PC-9 (cell line): ENCODE measurements at regions of chr12 and their contacts with region 1.

Region 1: DNA sequence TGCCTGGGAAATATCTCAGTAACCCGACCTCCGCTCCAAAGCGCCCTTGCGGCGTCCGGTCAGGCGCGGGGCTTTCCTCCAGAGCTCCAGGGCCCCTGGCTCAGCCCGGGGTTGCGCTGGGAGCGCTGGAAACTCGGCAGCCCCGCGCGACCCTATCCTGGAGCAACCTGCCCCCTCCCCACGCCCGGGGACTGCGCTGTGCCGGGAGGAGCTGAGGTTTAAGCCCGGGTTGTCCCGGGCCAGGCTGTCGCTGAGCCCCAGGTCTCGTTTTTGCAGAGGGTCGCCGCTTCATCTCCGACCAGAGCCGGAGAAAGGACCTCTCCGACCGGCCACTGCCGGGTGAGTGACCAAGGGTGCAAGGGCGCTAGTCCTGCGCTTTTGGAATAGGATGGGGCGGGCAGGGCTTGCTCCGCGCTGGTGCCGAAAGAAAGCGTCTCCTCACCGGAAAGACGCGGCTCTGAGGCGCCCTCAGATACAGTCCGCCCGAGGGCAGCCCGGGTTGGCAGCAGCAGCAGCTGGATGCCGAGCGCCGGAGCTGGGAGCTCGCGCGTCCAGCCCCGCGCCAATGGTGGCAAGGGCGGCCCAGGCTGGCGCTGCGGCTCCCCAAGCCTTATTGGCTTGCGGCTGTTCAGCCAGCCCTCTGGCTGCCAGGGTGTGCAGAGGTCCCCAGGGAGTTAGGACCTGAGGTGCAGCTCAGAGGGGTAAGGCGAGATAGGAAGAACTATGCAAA is 1.5 kb downstream of the SPX start:
- DNase-seq: peak in 1 of 2 experiments; percentile 63
- H3K4me3 ChIP-seq: peak overlapping the region; percentile 50; the same call in 1 of the 2 replicates
- H3K27ac ChIP-seq: no peak overlapping the region
- H3K4me1 ChIP-seq: peaks cover 13% of the 10 kb centered on the region
- H3K27me3 ChIP-seq: peaks cover 10% of the 10 kb centered on the region; the same call in 1 of the 2 replicates
- CTCF ChIP-seq: no peak

Region 2: DNA sequence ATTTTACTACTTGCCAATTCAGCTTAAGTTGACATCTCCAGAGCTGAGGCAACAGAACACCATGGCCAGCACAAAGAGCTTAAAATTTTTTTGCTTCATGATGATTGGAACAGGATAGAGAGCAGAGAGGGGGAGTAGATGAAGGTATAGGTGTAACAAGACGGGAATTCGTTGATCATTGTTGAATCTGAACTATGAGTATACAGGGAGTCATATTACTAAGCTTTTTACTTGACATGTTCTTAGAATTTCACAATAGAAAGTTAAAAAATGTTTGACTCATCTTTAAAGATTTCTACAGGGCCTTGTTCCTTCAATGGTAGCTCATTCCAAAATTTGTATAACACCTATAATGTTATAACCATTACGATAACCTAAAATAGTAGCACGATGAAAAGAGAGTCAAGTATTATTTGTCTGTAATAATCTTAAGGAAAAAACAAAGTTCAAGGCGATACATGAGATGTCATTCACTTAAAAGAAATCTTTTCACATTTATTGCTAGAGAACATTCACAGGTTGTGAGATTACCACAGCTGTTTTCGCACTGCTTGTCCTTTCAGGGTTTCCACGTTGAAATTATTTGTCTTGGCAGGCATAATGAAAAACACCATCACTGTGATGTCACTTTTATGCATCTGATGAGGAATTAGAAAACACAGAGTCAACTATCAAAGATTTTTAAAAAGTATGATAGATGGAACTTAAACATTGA is 32.4 kb after region 1 on chr12:
- CTCF ChIA-PET with region 1: no interaction called
- POLR2A ChIA-PET with region 1: no interaction called
- intact Hi-C with region 1: no loop called
- DNase-seq: peak in 1 of 2 experiments; percentile 72
- H3K4me3 ChIP-seq: no peak overlapping the region
- H3K27ac ChIP-seq: peak overlapping the region; percentile 48
- H3K4me1 ChIP-seq: peaks cover 18% of the 10 kb centered on the region
- H3K27me3 ChIP-seq: no peaks in the 10 kb centered on the region
- CTCF ChIP-seq: no peak

Region 3: GRCh38 chr12:21642707-21643389 is 115.2 kb after region 1 on chr12:
- CTCF ChIA-PET with region 1: no interaction called
- POLR2A ChIA-PET with region 1: interaction called, 11 read pairs
- intact Hi-C with region 1: no loop called
- DNase-seq: no peak
- H3K4me3 ChIP-seq: no peak overlapping the region
- H3K27ac ChIP-seq: no peak overlapping the region
- H3K4me1 ChIP-seq: peaks cover 21% of the 10 kb centered on the region
- H3K27me3 ChIP-seq: no peaks in the 10 kb centered on the region
- CTCF ChIP-seq: no peak

Region 4: GRCh38 chr12:22130671-22131070 is 603.1 kb after region 1 on chr12:
- CTCF ChIA-PET with region 1: no interaction called
- POLR2A ChIA-PET with region 1: no interaction called
- intact Hi-C with region 1: no loop called
- DNase-seq: no peak
- H3K4me3 ChIP-seq: no peak overlapping the region
- H3K27ac ChIP-seq: no peak overlapping the region
- H3K4me1 ChIP-seq: no peaks in the 10 kb centered on the region
- H3K27me3 ChIP-seq: no peaks in the 10 kb centered on the region
- CTCF ChIP-seq: no peak